HEK293 (cell line): ENCODE measurements at regions of chr22 and their contacts with region 1.

Region 1: GRCh38 chr22:32796865-32797573 is 4.5 kb upstream of the TIMP3 start:
- H3K4me3 ChIP-seq: no peak overlapping the region
- H3K27ac ChIP-seq: no peak overlapping the region
- H3K4me1 ChIP-seq: 0 out of 2 replicates have a peak, but pooled peaks cover 2% of the 10 kb centered on the region
- CTCF ChIP-seq: peak; percentile 86

Region 2: DNA sequence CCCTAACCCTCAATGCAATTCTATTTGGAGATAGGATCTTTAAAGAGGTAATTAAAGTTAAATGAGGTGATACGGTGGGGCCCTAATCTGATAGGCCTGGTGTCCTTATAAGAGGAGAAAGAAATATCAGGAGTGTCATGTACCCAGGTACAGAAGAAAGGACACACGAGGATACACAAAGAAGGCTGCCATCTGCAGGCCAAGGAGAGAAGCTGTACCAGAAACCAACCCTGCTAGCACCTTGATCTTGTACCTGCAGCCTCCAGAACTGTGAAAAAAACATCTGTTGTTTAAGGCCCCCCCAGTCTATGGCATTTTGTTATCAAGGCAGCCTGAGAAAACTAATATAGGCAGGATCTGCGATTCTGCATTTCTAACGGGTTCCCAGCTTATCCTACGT is 278.2 kb before region 1 on chr22:
- CTCF ChIA-PET with region 1: interaction called, 238 read pairs
- POLR2A ChIA-PET with region 1: no interaction called
- H3K4me3 ChIP-seq: no peak overlapping the region
- H3K27ac ChIP-seq: no peak overlapping the region
- H3K4me1 ChIP-seq: no peaks in the 10 kb centered on the region
- CTCF ChIP-seq: no peak

Region 3: GRCh38 chr22:32622004-32622743 is 174.8 kb before region 1 on chr22:
- CTCF ChIA-PET with region 1: interaction called, 21 read pairs
- POLR2A ChIA-PET with region 1: no interaction called
- H3K4me3 ChIP-seq: no peak overlapping the region
- H3K27ac ChIP-seq: no peak overlapping the region
- H3K4me1 ChIP-seq: peaks cover 7% of the 10 kb centered on the region
- CTCF ChIP-seq: no peak

Region 4: DNA sequence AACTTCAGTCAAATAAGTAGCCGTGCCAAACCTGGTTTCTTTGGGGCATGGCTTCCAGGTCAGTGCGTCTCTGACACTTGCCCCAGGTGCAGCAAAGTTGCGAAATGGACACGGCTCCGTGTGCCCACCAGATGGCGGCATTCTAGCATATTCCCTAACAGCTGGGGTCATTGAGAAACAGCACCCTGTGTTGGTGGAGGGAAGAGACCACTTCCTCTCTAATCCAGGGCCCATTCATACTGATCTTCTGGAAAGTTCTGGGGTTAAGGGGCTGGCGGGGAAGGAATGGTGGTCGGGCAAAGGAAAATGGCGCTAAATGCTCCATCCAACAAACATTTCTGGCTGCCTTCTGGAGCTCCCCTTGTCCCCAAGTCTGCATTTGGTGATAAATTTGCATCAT is 136.7 kb before region 1 on chr22:
- CTCF ChIA-PET with region 1: interaction called, 251 read pairs
- POLR2A ChIA-PET with region 1: interaction called, 8 read pairs
- H3K4me3 ChIP-seq: no peak overlapping the region
- H3K27ac ChIP-seq: no peak overlapping the region
- H3K4me1 ChIP-seq: no peaks in the 10 kb centered on the region
- CTCF ChIP-seq: peak; percentile 67

Region 5: GRCh38 chr22:32752816-32753520 is 44.1 kb before region 1 on chr22:
- CTCF ChIA-PET with region 1: no interaction called
- POLR2A ChIA-PET with region 1: no interaction called
- H3K4me3 ChIP-seq: no peak overlapping the region
- H3K27ac ChIP-seq: no peak overlapping the region
- H3K4me1 ChIP-seq: no peaks in the 10 kb centered on the region
- CTCF ChIP-seq: no peak

Region 6: DNA sequence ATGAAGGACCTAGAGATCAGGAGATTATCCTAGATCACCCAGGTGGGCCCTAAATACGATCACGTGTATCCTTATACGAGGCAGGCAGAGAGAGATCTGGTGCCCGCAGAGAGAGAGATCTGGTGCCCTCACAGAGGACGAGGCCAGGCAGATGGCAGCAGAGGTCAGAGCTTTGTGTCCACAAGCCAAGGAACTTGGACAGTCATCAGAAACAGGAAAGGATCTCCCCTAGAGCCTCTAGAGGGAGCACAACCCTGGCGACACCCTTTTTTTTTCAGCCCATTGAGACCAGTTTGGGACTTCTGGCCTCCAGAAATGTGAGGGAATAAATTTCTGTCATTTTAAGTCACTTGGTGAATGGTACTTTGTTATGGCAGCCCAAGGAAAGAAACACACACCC is 21.1 kb before region 1 on chr22:
- CTCF ChIA-PET with region 1: interaction called, 50 read pairs
- POLR2A ChIA-PET with region 1: no interaction called
- H3K4me3 ChIP-seq: no peak overlapping the region
- H3K27ac ChIP-seq: no peak overlapping the region
- H3K4me1 ChIP-seq: no peaks in the 10 kb centered on the region
- CTCF ChIP-seq: no peak

Region 7: GRCh38 chr22:32830473-32830872 is 33.5 kb after region 1 on chr22:
- CTCF ChIA-PET with region 1: interaction called, 11 read pairs
- POLR2A ChIA-PET with region 1: interaction called, 8 read pairs
- H3K4me3 ChIP-seq: no peak overlapping the region
- H3K27ac ChIP-seq: no peak overlapping the region
- H3K4me1 ChIP-seq: no peaks in the 10 kb centered on the region
- CTCF ChIP-seq: no peak

Region 8: GRCh38 chr22:32868936-32869335 is 71.9 kb after region 1 on chr22:
- CTCF ChIA-PET with region 1: no interaction called
- POLR2A ChIA-PET with region 1: no interaction called
- H3K4me3 ChIP-seq: no peak overlapping the region
- H3K27ac ChIP-seq: no peak overlapping the region
- H3K4me1 ChIP-seq: no peaks in the 10 kb centered on the region
- CTCF ChIP-seq: no peak

Region 9: DNA sequence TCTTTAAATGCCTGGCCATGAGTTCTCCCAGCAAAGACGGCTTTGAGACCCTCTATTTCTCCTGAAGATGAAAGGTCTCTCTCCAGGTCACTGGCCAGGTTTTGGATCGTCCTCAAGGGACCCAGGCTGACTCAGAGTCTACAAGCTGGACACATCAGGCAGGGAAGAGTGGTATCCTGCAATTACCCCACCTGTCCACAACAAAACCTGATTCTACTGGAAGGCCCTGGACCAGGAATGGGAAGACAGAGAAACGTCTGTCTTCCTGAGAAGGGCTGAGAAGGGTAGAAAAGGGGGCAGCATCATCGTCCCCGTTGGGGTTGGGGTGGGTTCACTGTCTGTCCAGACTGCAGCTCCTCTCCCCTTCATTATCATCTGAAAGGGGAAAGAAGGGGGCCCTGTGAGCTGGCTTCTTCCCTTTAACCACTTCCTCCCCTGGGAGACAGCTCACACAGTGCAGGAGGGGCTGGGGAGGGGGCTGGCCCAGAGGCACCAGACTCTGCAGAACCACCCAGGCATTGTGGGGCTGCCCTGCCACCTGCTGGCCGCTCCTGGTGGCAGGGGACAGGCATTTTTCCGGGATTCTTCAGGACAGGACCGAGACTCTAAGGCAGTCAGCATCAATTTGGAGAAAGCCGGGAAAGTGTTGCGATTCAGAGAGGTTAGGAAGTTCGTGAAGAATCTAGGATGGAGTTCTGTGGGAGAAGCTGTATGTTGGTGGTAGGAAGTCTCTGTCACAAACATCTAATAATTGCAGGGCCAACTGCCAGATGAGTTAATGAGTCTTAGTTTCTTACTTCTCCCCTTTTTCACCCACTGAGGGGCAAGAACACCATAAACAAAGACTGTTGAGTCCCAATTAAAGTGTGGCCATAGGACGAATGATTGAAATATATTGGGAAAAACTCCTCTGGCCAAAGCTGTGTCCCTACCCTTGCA is 203.6 kb after region 1 on chr22:
- CTCF ChIA-PET with region 1: interaction called, 38 read pairs
- POLR2A ChIA-PET with region 1: no interaction called
- H3K4me3 ChIP-seq: no peak overlapping the region
- H3K27ac ChIP-seq: no peak overlapping the region
- H3K4me1 ChIP-seq: no peaks in the 10 kb centered on the region
- CTCF ChIP-seq: peak; percentile 76

Region 10: GRCh38 chr22:33539902-33540751 is 743.1 kb after region 1 on chr22:
- CTCF ChIA-PET with region 1: no interaction called
- POLR2A ChIA-PET with region 1: no interaction called
- H3K4me3 ChIP-seq: no peak overlapping the region
- H3K27ac ChIP-seq: no peak overlapping the region
- H3K4me1 ChIP-seq: no peaks in the 10 kb centered on the region
- CTCF ChIP-seq: no peak